RWPE1 (cell line): ENCODE measurements at regions of chr1 and their contacts with region 1.

Region 1: DNA sequence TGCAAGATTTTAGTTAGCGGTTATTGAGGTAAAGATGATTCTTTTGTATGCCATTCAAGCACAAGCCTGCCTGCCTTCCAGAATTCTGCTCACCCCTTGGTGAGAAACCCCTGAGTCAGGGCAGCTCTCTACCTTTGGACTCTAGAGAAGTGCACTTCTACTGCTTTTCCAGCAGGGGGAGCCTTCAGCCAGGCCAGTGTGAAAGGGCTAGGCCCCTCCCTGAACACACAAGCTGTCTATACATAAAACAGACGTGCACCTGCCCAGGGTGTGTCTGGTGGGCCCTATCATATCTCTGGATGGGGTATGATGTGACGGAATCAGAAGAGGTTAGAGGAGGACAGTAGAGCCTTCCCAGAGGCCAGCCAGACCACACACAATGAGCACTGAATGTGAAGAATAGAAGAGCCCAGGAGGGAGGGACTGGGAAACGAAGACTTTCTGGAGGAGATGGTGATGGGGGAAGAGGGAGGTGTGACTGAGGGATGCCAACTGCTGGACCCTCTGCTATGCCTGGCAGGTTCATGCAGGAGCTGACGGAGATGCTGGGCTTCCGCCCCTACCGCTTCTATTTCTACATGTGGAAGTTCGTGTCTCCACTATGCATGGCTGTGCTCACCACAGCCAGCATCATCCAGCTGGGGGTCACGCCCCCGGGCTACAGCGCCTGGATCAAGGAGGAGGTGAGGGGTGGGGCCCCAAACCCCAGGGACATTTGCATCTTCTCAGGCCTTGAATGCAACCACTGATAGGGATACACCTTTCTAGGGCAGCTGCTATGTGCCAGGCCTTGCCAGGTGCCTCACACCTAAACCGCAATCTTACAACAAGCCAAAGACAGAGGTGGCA is 13.0 kb upstream of the KCNC4 start:
- DNase-seq: peak; percentile 80
- H3K27ac ChIP-seq: no peak overlapping the region
- CTCF ChIP-seq: peak; percentile 92

Region 2: GRCh38 chr1:110233861-110234260 is 36.7 kb after region 1 on chr1:
- CTCF ChIA-PET with region 1: no interaction called
- POLR2A ChIA-PET with region 1: no interaction called
- DNase-seq: no peak
- H3K27ac ChIP-seq: no peak overlapping the region
- CTCF ChIP-seq: no peak

Region 3: DNA sequence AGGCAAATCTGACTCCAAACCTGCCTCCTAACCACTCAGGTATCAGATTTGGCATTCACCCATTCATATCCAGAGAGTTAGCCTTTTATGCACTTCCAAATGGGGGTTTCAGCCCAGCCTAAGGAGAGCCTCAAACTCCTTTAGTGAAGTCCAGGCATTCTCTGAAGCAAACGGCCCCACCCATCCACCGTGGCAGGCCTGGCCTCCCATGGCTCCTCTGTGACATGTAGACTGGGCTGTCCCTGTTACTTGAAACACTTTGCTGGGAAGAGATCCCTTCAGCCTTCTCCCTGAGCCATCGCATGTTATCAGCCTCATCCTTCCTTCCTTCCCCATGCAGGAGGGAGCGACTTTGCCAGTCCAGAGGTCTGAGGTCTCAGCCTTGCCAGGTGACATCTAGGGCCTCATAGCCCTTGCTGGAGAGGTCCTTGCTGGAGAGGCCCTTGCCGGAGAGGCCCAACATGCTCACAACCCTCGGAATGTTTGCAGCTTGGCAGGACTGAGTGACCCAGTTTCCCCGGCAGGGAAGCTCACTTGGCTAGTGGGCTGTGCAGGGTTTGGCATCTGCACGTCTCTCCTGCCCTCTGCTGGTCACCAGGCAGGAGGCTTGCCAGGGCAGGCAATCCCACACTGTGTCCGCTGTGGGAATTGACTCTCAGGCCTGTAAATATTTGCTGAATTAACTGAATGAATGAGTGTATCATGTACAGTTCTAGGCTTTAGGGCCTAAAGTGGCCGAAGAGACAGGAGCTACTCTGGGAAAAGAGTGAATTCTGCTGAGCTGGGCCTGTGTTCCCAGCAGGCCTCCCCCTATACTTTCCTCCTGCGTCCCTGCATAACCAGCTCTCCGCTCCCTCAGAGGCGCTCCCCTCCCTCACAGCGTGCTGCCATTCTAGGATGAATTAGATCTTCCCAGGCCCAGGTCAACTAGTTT is 115.3 kb after region 1 on chr1:
- CTCF ChIA-PET with region 1: interaction called, 265 read pairs
- POLR2A ChIA-PET with region 1: no interaction called
- DNase-seq: peak; percentile 63
- H3K27ac ChIP-seq: no peak overlapping the region
- CTCF ChIP-seq: peak; percentile 80

Region 4: DNA sequence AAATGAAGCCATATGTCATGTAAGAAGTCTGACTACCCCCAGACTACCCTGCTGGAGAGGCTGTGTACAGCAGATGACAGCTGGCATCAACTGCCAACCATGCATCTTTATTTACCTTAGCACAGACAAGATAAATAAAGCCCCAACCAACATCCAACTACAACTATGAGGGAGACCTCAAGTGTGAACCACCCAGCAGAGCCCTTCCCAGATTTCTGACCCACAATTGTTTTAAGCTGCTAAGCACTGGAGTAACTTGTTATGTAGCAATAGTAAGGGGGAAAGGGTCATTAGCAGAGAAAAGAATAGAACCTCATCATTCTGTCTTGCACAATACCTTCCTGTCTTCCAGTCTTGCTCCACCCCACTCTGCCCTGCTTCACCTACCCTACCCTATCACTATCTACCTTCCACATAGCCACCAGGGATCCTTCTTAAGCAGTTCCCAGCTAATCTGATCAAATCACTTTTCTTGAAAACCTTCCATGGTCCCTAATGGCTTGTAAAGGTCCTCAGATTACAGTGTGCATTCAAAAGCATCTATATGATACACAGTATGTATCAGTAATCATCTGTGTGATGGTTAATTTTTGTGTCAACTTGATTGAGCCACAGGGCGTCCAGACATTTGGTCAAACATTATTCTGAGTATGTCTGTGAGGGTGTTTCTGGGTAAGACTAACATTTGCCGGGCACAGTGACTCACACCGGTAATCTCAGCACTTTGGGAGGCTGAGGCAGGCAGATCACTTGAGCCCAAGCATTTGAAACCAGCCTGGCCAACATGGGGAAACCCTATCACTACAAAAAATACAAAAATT is 122.4 kb after region 1 on chr1:
- CTCF ChIA-PET with region 1: interaction called, 265 read pairs
- POLR2A ChIA-PET with region 1: interaction called, 5 read pairs
- DNase-seq: no peak
- H3K27ac ChIP-seq: no peak overlapping the region
- CTCF ChIP-seq: no peak